ENCODE measurements at regions of chr1 and their contacts with region 1.

Region 1: DNA sequence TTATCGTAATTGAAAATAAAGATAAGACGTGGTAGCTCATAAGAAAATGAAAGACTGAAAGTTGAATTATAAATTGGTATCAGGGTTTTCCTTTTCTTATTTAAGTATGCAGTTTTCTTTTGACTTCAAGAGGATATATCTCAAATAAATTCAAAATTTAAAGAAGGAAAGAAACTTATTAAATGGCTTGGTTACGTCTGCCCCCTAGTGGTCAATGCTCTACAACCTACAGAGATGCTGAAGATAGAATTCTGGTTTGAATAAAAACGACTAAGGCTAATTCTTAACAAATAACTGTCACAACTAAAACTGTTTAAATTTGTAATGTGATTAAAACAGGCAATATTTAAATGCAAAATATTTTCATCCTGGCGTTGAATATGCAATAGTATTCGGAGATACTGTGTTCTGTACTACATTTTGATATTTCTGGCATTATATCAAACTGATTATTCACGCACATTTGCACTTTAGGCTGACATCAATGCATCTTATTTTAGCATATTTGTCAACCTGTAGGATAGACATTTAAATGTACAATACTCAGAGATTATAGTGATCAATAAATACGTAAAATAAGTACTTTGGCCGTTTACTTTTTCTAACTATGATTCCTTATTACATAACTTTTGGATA is 26.8 kb downstream of the IFI44 start:
- DNase-seq: no peak
- H3K4me3 ChIP-seq: no peak overlapping the region
- H3K27ac ChIP-seq: no peak overlapping the region
- H3K4me1 ChIP-seq: no peaks in the 10 kb centered on the region
- H3K27me3 ChIP-seq: no peaks in the 10 kb centered on the region
- CTCF ChIP-seq: peak; percentile 40 to 77 (median 68)
- POLR2A ChIP-seq: no peak

Region 2: GRCh38 chr1:78145105-78145580 is 531.3 kb before region 1 on chr1:
- intact Hi-C with region 1: loop called (anchors 10 kb)
- DNase-seq: no peak
- H3K4me3 ChIP-seq: no peak overlapping the region
- H3K27ac ChIP-seq: no peak overlapping the region
- H3K4me1 ChIP-seq: no peaks in the 10 kb centered on the region
- H3K27me3 ChIP-seq: no peaks in the 10 kb centered on the region
- CTCF ChIP-seq: peak; percentile 50 to 85 (median 84)
- POLR2A ChIP-seq: no peak

Region 3: DNA sequence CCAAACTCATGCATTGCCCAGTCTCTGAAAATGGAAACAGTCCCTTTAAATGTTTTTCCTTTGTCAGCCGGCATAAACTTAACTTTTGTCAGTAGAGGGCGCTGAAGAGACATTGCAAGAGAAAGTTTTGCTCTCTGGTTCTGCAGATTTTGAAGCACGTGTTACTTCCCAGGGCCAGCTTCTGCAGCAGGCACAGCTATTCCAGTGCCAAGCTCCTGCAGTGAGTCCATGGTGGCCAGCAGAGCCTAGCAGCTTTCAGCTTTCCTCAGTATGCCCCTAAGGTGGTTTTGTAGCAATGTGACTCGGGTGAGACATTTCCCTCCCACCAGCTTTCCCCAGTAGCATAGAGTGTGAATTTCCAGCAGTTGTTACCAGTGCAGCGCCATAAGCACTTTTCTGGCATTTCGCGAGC is 58.8 kb before region 1 on chr1:
- intact Hi-C with region 1: loop called (anchors 2 kb)
- DNase-seq: no peak
- H3K4me3 ChIP-seq: no peak overlapping the region
- H3K27ac ChIP-seq: no peak overlapping the region
- H3K4me1 ChIP-seq: peaks cover 28% of the 10 kb centered on the region
- H3K27me3 ChIP-seq: no peaks in the 10 kb centered on the region
- CTCF ChIP-seq: peak; percentile 71 to 88 (median 80)
- POLR2A ChIP-seq: no peak

Measured in vagina (tissue), 2 donors.